Activated CD4-positive, alpha-beta memory T cell treated with anti-CD3 and anti-CD28 coated beads for 36 hours (primary cell): ENCODE measurements at regions of chr21 and their contacts with region 1.

Region 1: GRCh38 chr21:37220981-37221664 is 46.0 kb downstream of the VPS26C start:
- DNase-seq: peak; percentile 97
- H3K4me3 Mint-ChIP-seq: peak overlapping the region; percentile 86
- H3K27ac Mint-ChIP-seq: peak overlapping the region; percentile 96
- H3K4me1 Mint-ChIP-seq: peaks cover 36% of the 10 kb centered on the region
- H3K27me3 Mint-ChIP-seq: no peaks in the 10 kb centered on the region

Region 2: GRCh38 chr21:37072988-37073416 is 148.1 kb before region 1 on chr21 and contains the starts of genes PIGP and TTC3:
- CTCF ChIA-PET with region 1: no interaction called
- POLR2A ChIA-PET with region 1: no interaction called
- intact Hi-C with region 1: loop called (anchors 2 kb)
- DNase-seq: peak; percentile 97
- H3K4me3 Mint-ChIP-seq: peak within 1 kb of the TSS; percentile 99
- H3K27ac Mint-ChIP-seq: peak within 1 kb of the TSS; percentile 89
- H3K4me1 Mint-ChIP-seq: peaks cover 50% of the 10 kb centered on the region
- H3K27me3 Mint-ChIP-seq: no peaks in the 10 kb centered on the region
- total RNA-seq, gene PIGP: 19.2 to 21.2 TPM
- total RNA-seq, gene TTC3: 63.1 to 65.6 TPM

Region 3: GRCh38 chr21:37101384-37101783 is 119.7 kb before region 1 on chr21:
- CTCF ChIA-PET with region 1: no interaction called
- POLR2A ChIA-PET with region 1: no interaction called
- intact Hi-C with region 1: no loop called
- DNase-seq: no peak
- H3K4me3 Mint-ChIP-seq: no peak overlapping the region
- H3K27ac Mint-ChIP-seq: no peak overlapping the region
- H3K4me1 Mint-ChIP-seq: no peaks in the 10 kb centered on the region
- H3K27me3 Mint-ChIP-seq: no peaks in the 10 kb centered on the region

Region 4: DNA sequence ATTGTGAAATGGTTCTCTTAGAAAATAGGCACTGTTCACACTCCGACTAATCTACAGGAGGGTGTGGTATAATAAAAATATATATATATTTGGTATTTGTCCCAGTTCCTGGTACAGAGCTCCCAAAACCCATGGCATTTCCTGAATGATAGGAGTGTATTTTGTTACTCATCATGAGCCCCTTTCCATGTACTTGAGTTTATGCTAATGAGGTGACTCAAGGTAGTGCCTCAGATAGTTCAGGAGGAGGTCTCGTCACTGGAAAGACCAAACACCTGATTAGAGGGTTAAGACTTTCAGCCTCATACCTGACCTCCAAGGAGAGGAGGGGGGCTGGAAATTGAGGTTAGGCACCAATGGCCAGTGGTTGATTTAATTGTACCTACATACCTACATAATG is 90.2 kb before region 1 on chr21:
- CTCF ChIA-PET with region 1: no interaction called
- POLR2A ChIA-PET with region 1: no interaction called
- intact Hi-C with region 1: no loop called
- DNase-seq: no peak
- H3K4me3 Mint-ChIP-seq: no peak overlapping the region
- H3K27ac Mint-ChIP-seq: no peak overlapping the region
- H3K4me1 Mint-ChIP-seq: peaks cover 7% of the 10 kb centered on the region
- H3K27me3 Mint-ChIP-seq: no peaks in the 10 kb centered on the region

Region 5: GRCh38 chr21:37257967-37258877 is 37.1 kb after region 1 on chr21:
- CTCF ChIA-PET with region 1: no interaction called
- POLR2A ChIA-PET with region 1: interaction called, 8 read pairs
- intact Hi-C with region 1: loop called (anchors 2 kb)
- DNase-seq: peak; percentile 89
- H3K4me3 Mint-ChIP-seq: peak overlapping the region; percentile 86
- H3K27ac Mint-ChIP-seq: peak overlapping the region; percentile 93
- H3K4me1 Mint-ChIP-seq: peaks cover 31% of the 10 kb centered on the region
- H3K27me3 Mint-ChIP-seq: no peaks in the 10 kb centered on the region